Left cardiac atrium (tissue), 4 donors: ENCODE measurements at regions of chr9 and their contacts with region 1.

Region 1: DNA sequence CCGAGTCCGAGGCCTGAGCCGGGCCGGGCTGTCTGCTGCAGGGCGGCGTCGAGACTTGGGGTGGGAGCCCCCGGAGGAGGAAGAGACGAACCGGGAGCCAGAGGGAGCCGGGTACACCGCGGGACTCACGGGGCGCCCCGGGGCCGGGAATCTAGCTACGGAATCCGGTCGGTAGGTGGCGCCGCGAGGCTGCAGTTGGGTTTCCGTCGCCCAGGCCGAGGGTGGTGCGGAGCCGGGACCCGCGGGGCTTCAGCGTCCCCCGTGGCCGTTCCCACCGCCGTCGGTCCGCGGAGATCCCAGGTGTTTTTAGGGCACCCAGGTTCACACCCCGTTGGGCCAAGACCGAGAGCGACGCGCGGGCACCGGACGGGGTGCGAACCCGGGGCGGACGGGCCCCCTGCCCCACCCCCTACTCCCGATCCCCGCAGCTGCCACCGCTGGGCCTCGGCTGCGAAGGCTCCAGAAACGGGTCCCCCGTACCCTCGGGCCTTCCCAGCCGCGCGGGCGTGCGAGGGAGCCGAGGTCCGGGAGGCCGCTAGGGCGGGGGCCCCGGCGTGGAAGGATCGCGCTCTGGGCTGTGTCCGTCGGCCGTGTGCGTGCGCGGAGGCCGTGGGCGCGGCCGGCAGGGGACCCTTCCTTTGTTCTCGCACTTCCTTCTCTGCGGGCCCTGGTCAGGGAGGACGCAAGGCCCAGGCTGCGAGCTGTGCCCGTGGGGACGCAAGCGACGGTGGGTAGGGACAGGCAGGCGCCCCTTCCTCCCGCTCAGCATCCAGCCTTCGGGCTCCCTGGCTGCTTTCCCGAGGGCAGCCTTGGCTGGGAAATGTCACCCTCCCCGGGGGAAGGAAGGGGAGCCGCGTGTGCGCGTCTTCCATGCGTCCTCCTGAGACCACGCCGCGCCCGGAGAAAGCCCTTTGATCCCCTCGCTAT is 146.6 kb downstream of the GAPVD1 start:
- DNase-seq: peak; percentile 84
- ATAC-seq: peak; percentile 93

Region 2: GRCh38 chr9:125374443-125375309 is 33.6 kb before region 1 on chr9:
- intact Hi-C with region 1: no loop called
- DNase-seq: peak; percentile 65
- ATAC-seq: peak; percentile 82 to 90

Region 3: DNA sequence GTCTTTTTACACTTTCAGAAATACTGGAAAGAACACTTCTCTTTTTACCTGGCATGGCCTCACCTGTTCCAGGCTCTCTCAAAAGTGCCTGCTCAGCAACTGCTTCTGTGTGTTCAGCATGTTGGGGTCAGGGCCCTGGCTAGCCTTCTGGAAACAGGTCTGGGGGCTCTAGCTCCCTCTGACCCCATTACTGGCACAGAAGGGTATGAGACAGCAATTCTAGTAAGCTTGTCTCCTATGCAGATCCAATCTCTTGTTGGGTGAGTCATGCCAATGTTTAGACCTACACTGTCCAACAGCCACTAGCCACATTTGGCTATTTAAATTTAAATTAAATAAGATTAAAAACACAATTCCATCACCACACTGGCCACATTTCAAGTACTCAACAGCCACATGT is 217.9 kb after region 1 on chr9:
- intact Hi-C with region 1: loop called in 1 of 2 experiments (anchors 10 kb)
- DNase-seq: no peak
- ATAC-seq: peak in 1 of 2 donors; percentile 40

Region 4: DNA sequence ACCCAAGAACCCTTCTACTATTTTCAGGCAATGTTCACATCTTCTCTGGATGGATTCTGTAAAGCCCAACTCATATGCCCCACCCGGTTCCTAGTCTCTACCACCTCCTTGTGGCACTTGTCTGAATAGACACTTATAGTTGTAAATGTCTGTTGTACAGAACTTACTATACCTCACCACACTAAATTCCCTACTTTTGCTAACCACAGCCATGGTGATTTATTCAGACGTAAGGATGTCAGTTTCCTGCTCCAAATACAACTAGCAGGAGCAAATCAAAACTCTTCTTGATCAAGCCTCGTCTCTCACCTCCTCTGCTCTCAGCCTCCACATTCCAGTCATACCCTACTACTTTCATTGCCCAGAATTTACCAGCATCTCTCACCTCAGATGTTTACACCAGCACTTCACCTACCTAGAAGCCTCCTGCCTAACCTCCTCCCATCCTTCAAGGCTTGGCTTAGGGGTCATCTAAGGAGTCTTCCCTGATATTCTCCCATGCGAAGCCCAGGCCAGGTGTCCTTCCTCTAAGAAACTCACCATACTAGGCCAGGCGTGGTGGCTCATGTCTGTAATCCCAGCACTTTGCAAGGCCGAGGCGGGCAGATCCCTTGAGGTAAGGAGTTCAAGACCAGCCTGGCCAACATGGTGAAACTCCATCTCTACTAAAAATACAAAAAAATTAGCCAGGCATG is 223.3 kb after region 1 on chr9:
- intact Hi-C with region 1: loop called (anchors 2 to 10 kb)
- DNase-seq: no peak
- ATAC-seq: peak; percentile 64 to 67

Region 5: GRCh38 chr9:126228781-126229444 is 820.7 kb after region 1 on chr9:
- intact Hi-C with region 1: loop called (anchors 2 to 10 kb)
- DNase-seq: peak; percentile 71
- ATAC-seq: peak; percentile 91 to 95

Region 6: DNA sequence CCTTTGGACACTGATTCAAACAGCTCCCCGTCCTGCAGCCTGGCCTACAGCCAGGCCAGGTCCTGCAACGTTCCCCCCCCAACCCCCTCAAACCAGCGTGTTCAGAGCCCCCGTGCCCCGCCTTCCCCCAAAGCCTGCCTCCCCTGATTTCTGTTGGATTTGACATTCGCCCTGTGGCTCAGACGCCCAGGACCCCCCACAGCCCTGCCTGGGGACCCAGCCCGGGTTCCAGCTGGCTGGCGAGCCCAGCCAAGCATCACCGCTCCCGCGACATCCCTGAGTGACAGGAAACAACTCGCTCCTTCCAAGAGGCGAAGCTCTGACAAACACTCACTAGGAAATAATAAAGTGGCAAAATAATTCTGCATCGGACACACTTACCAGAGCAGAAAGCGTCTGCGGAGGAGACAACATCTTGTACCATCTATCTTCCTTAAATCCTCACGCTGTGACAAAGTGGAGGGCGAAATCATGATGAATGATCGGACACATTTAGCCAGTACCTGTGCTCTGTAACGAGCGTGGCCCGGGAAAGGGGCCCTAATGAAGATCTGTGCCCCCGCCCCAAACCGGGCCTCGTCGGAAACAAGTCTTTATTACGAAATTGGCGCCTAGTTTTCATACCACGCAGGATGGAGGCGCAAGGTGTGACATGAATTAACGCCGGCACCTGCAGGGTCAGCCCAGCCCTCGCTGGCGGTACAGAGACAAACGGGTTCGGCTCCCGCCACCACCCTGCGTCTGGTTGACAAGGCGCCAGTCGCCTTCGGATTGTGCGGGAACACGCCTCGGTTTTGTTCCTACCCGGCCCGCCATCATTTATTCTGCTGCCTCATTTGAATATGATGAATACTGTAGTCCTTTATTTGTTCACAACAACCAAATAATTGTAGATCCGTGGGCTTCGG is 827.4 kb after region 1 on chr9:
- intact Hi-C with region 1: loop called in 1 of 2 experiments (anchors 10 kb)
- DNase-seq: no peak
- ATAC-seq: no peak